ENCODE measurements at regions of chr17 and their contacts with region 1.

Region 1: GRCh38 chr17:64420143-64420971 is 28.6 kb upstream of the MILR1 start:
- DNase-seq: peak; percentile 63
- ATAC-seq: peak; percentile 86
- H3K4me3 Mint-ChIP-seq: no peak overlapping the region
- H3K27ac Mint-ChIP-seq: no peak overlapping the region
- H3K4me1 Mint-ChIP-seq: peaks cover 14% of the 10 kb centered on the region
- H3K27me3 Mint-ChIP-seq: peaks cover 3% of the 10 kb centered on the region

Region 2: GRCh38 chr17:64320613-64321553 is 99.5 kb before region 1 on chr17:
- CTCF ChIA-PET with region 1: interaction called, 131 read pairs
- POLR2A ChIA-PET with region 1: no interaction called
- DNase-seq: peak; percentile 70
- ATAC-seq: peak; percentile 60
- H3K4me3 Mint-ChIP-seq: no peak overlapping the region
- H3K27ac Mint-ChIP-seq: no peak overlapping the region
- H3K4me1 Mint-ChIP-seq: peaks cover 10% of the 10 kb centered on the region
- H3K27me3 Mint-ChIP-seq: peaks cover 4% of the 10 kb centered on the region

Region 3: DNA sequence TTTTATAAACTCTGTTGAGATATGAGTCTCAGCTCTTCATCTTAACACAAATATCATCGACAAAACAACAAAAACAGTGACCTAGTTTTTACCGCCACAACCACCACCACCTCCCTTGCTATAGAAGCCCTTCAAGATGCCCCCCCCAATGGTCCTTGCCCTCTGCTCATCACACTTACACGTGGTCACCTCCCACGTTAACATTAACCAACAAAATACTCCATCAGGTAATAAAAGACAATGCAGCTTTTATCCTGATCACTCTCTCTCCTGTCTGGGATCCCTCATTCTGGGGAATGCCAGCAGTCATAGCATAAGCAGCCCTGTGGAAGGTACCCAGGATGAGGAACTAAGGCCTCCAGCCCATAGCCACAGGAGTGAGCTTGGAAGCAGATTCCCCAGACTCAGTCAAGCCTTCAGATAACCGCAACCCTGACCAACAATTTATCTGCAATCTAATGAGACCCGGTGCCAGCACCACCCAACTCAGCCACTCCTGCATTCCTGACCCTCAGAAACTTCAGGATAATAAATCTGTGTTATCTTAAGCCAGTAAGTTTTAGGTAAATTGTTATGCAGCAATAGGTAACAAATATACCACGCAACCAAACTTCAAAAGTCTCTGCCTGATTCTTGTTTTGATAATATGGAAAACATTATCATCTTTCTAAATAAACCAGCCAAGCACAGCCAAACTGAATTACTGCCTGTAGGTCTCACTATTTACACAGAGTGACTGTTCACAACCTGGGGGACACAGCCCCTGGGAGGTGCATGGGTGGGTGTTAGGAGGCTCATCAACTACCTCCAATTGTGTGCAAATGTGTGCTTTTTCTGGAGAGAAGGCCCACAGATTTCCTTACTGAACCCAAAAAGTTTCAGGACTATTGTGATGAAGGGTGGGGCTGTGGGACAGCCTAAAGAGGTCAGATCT is 35.8 kb before region 1 on chr17:
- CTCF ChIA-PET with region 1: interaction called, 14 read pairs
- POLR2A ChIA-PET with region 1: no interaction called
- DNase-seq: no peak
- ATAC-seq: no peak
- H3K4me3 Mint-ChIP-seq: peak overlapping the region; percentile 50
- H3K27ac Mint-ChIP-seq: peak overlapping the region; percentile 70
- H3K4me1 Mint-ChIP-seq: peaks cover 67% of the 10 kb centered on the region
- H3K27me3 Mint-ChIP-seq: no peaks in the 10 kb centered on the region

Region 4: GRCh38 chr17:64448665-64449512 is 28.5 kb after region 1 on chr17 and contains the start of gene MILR1:
- CTCF ChIA-PET with region 1: interaction called, 10 read pairs
- POLR2A ChIA-PET with region 1: interaction called, 3 read pairs
- DNase-seq: no peak
- ATAC-seq: peak; percentile 63
- H3K4me3 Mint-ChIP-seq: peak within 1 kb of the TSS; percentile 40
- H3K27ac Mint-ChIP-seq: peak within 1 kb of the TSS; percentile 80
- H3K4me1 Mint-ChIP-seq: peaks cover 36% of the 10 kb centered on the region
- H3K27me3 Mint-ChIP-seq: no peaks in the 10 kb centered on the region
- total RNA-seq, gene MILR1: 1.7 to 2.3 TPM

Region 5: DNA sequence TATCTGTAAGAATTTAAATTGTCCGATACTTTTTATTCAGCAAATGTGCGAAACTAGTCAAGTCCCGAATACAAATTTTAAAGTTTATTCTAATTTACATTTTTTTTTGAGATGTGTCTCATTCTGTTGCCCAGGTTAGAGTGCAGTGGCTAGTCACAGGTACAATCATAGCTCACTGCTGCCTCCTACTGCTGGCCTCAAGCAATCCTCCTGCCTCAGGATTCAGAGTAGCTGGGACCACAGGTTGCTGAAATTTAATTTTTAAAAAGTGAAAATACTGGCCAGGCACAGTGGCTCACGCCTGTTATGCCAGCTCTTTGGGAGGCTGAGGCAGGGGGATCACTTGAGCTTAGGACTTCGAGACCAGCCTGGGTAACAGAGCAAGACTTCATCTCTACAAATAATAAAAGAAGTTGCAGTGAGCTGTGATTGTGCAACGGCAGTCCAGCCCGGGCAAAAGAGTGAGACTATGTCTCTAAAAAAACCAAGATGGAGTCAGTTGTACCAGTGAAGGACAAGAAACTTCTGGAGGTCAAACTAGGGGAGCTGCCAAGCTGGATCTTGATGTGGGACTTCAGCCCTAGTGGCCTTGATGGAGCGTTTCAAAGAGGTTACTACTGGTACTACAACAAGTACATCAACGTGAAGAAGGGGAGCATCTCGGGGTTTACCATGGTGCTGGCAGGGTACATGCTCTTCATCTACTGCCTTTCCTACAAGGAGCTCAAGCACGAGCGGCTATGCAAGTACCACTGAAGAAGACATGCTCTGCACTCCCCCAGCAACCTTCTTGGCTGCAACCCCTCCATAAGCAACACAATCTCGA is 70.9 kb after region 1 on chr17:
- CTCF ChIA-PET with region 1: interaction called, 492 read pairs
- POLR2A ChIA-PET with region 1: interaction called, 16 read pairs
- DNase-seq: peak; percentile 78
- ATAC-seq: peak; percentile 73
- H3K4me3 Mint-ChIP-seq: no peak overlapping the region
- H3K27ac Mint-ChIP-seq: no peak overlapping the region
- H3K4me1 Mint-ChIP-seq: peaks cover 38% of the 10 kb centered on the region
- H3K27me3 Mint-ChIP-seq: no peaks in the 10 kb centered on the region

Region 6: GRCh38 chr17:64599187-64599676 is 178.9 kb after region 1 on chr17:
- CTCF ChIA-PET with region 1: interaction called, 12 read pairs
- POLR2A ChIA-PET with region 1: no interaction called
- DNase-seq: peak; percentile 83
- ATAC-seq: peak; percentile 100
- H3K4me3 Mint-ChIP-seq: peak overlapping the region; percentile 42
- H3K27ac Mint-ChIP-seq: peak overlapping the region; percentile 71
- H3K4me1 Mint-ChIP-seq: peaks cover 31% of the 10 kb centered on the region
- H3K27me3 Mint-ChIP-seq: no peaks in the 10 kb centered on the region

Measured in activated CD8-positive, alpha-beta T cell treated with anti-CD3 and anti-CD28 coated beads, Interleukin-2, amount 10 ng/mL, durations not matched to agents 7 days and 5 days (primary cell).